Transverse colon (tissue), 4 donors: ENCODE measurements at regions of chr19 and their contacts with region 1.

Region 1: DNA sequence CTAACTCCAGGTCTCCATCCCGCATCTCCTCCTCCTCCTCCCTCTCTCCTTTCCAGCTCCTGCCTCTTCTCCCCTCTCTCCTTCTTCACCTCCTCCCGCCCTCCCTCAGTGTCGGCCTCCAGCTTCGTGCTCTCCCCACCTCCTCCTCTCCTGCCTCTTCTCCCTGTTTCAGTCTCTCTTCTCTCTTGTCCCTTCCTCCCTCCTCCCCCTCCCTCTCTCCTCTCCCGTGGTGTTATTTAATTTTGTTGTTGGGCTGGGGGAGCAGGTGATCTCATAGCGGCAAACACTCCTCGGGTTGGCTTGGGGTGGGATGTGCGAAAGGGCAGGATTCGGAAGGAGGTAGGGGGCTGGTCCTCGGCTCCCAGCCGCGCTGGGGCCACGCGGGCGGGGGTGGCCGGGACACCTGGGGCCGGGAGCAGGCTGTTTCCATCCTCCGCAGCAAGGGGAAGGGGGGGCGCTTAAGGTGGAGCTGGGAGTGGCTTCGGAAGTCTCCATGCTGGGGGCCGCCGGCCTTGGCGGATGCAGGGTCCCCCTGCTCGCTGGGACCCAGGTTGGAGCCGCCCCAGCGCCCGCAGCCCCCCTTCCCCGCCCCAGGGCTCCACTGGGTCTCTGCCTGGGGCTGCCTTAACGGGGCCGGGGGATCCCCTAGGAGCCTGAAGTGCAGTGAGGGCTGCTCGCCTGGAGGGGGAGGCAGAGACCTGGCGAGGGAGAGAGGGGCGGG is at the start of gene CA11:
- DNase-seq: peak; percentile 92
- H3K4me3 ChIP-seq: peak within 1 kb of the TSS; percentile 34 to 54 (median 45)
- H3K27ac ChIP-seq: peak within 1 kb of the TSS; percentile 81 to 90 (median 84)
- H3K4me1 ChIP-seq: peaks cover 8 to 27% (median 13%) of the 10 kb centered on the region in 4 donors
- H3K27me3 ChIP-seq: no peaks in the 10 kb centered on the region
- CTCF ChIP-seq: peak; percentile 87 to 94 (median 90)
- EP300 ChIP-seq: no peak
- POLR2A ChIP-seq: peak; percentile 32
- total RNA-seq, gene CA11: 1.4 to 2.5 TPM in 2 of 4 donors, not detected in the others

Region 2: DNA sequence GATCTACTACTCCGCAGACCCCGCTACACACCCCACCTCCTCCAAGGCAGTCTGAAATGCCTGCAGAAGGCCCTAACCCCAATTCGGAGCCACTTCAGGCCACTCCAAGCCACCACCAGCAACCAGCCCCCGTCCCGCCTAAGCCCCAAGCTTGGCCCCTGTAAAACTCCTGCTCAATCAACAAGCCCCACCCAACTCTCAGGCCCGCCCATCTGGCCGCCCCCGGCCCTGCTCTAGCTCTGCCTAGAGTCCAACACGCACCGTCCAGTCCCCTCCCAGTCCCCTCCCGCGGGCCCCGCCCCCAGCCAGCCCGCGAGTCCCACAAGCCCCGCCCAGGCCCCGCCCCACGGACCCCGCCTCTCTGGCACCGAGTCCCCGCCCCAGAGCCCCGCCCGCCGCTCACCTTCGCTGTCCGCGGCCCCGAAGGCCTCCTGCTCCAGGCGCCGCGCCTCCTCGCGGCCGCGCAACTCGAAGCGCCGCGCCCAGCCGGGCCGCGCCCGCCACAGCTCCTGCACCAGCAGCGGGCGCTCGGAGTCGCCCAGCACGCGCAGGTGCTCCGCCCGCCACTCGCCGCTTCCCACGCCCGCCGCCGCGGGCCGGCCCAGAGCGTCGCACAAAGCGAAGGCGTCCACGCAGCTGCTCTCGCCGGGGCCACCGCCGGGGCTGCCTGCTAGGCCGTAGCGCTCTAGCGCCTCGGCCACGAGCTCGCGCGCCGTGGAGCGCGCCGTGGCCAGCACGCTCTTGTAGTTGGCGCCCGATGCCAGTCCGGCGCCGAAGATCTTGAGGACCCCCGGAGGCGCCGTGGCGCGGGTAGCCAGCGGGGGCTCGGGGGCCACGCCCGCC is 92.6 kb after region 1 on chr19:
- in situ Hi-C with region 1: loop called in 1 of 4 experiments (anchors 10 kb)
- intact Hi-C with region 1: loop called (anchors 5 kb)
- DNase-seq: peak; percentile 97
- H3K4me3 ChIP-seq: peak overlapping the region; percentile 32 to 60 (median 45)
- H3K27ac ChIP-seq: peak overlapping the region; percentile 68 to 75 (median 69)
- H3K4me1 ChIP-seq: peaks cover 0 to 30% (median 11%) of the 10 kb centered on the region in 4 donors
- H3K27me3 ChIP-seq: peaks cover 20% of the 10 kb centered on the region
- CTCF ChIP-seq: peak in 3 of 5 experiments; percentile 23 to 43 (median 37)
- EP300 ChIP-seq: no peak
- POLR2A ChIP-seq: no peak

Region 3: GRCh38 chr19:50214761-50215575 is 1568.8 kb after region 1 on chr19:
- in situ Hi-C with region 1: no loop called
- intact Hi-C with region 1: no loop called
- DNase-seq: peak; percentile 90
- H3K4me3 ChIP-seq: no peak overlapping the region
- H3K27ac ChIP-seq: peak overlapping the region; percentile 74 to 84 (median 76)
- H3K4me1 ChIP-seq: peaks cover 0 to 13% (median 11%) of the 10 kb centered on the region in 4 donors
- H3K27me3 ChIP-seq: no peaks in the 10 kb centered on the region
- CTCF ChIP-seq: no peak
- EP300 ChIP-seq: peak; percentile 29
- POLR2A ChIP-seq: no peak